ENCODE measurements at regions of chr3 and their contacts with region 1.

Region 1: GRCh38 chr3:184362668-184363540 is 1.4 kb downstream of the POLR2H start:
- DNase-seq: peak; percentile 93
- ATAC-seq: peak; percentile 86
- H3K4me3 Mint-ChIP-seq: peak overlapping the region; percentile 96
- H3K27ac Mint-ChIP-seq: peak overlapping the region; percentile 95
- H3K4me1 Mint-ChIP-seq: peaks cover 25% of the 10 kb centered on the region
- H3K27me3 Mint-ChIP-seq: no peaks in the 10 kb centered on the region
- CTCF ChIP-seq: no peak

Region 2: GRCh38 chr3:183635431-183636220 is 727.3 kb before region 1 on chr3 and contains the start of gene KLHL24:
- CTCF ChIA-PET with region 1: no interaction called
- POLR2A ChIA-PET with region 1: no interaction called
- intact Hi-C with region 1: loop called (anchors 5 kb)
- DNase-seq: peak; percentile 83
- ATAC-seq: peak; percentile 73
- H3K4me3 Mint-ChIP-seq: peak within 1 kb of the TSS; percentile 92
- H3K27ac Mint-ChIP-seq: peak within 1 kb of the TSS; percentile 92
- H3K4me1 Mint-ChIP-seq: peaks cover 27% of the 10 kb centered on the region
- H3K27me3 Mint-ChIP-seq: no peaks in the 10 kb centered on the region
- CTCF ChIP-seq: no peak
- total RNA-seq, gene KLHL24: 31.6 and 33.9 TPM in 2 replicates

Region 3: GRCh38 chr3:183895296-183895695 is 467.6 kb before region 1 on chr3:
- CTCF ChIA-PET with region 1: no interaction called
- POLR2A ChIA-PET with region 1: no interaction called
- intact Hi-C with region 1: loop called (anchors 5 kb)
- DNase-seq: no peak
- ATAC-seq: peak; percentile 97
- H3K4me3 Mint-ChIP-seq: no peak overlapping the region
- H3K27ac Mint-ChIP-seq: no peak overlapping the region
- H3K4me1 Mint-ChIP-seq: peaks cover 4% of the 10 kb centered on the region
- H3K27me3 Mint-ChIP-seq: peaks cover 22% of the 10 kb centered on the region
- CTCF ChIP-seq: no peak

Region 4: GRCh38 chr3:184185461-184186308 is 177.2 kb before region 1 on chr3 and contains the start of gene ABCF3:
- CTCF ChIA-PET with region 1: no interaction called
- POLR2A ChIA-PET with region 1: interaction called, 3 read pairs
- intact Hi-C with region 1: loop called (anchors 2 kb)
- DNase-seq: peak; percentile 99
- ATAC-seq: peak; percentile 95
- H3K4me3 Mint-ChIP-seq: peak within 1 kb of the TSS; percentile 99
- H3K27ac Mint-ChIP-seq: peak within 1 kb of the TSS; percentile 93
- H3K4me1 Mint-ChIP-seq: peaks cover 40% of the 10 kb centered on the region
- H3K27me3 Mint-ChIP-seq: no peaks in the 10 kb centered on the region
- CTCF ChIP-seq: no peak
- total RNA-seq, gene ABCF3: 78.0 and 86.7 TPM in 2 replicates

Region 5: DNA sequence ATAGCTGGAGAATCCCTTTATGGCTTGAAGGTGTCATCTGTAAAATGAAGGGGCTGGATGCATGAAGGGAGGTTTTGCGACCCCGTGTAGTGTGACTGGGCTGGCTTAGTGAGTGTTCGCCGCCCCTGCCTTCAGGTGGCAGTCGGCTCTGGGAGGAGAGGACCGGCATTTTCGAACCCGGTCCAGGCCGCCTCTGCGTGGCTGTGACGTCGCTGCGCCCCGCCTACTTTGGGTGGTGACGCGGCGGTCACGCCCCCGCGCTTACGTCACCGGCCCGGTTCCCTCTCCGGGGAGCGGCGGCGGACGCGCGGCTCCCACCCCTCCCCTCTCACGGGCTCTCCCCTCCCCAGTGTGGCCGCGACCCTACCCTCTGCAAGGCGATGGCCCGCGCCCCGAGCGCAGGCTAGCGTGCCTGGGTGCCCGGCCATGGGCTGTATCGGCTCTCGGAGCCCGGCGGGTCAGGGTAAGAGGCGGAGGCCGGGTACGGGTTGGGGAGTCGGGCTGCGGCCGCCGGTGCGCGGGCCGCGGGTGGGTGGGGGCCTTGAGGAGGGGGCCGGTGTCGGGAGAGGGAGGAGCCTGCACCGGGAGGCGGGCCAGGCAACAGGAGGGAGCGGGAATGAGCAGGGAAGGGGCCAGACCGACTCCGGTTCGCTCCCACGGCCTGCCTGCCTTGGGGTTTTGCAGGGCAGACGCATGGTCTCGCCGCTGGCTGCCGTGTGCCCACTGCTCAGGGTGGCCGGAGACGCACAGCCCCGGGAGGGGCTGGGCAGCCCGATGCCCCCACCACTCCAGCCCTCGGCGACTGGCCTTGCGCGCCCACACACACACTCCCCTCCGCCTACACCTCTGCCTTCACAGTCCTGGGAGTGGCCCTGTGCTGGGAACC is 27.0 kb before region 1 on chr3:
- CTCF ChIA-PET with region 1: no interaction called
- POLR2A ChIA-PET with region 1: interaction called, 3 read pairs
- intact Hi-C with region 1: loop called (anchors 1 kb)
- DNase-seq: peak; percentile 92
- ATAC-seq: peak; percentile 79
- H3K4me3 Mint-ChIP-seq: peak overlapping the region; percentile 84
- H3K27ac Mint-ChIP-seq: peak overlapping the region; percentile 85
- H3K4me1 Mint-ChIP-seq: peaks cover 33% of the 10 kb centered on the region
- H3K27me3 Mint-ChIP-seq: peaks cover 5% of the 10 kb centered on the region
- CTCF ChIP-seq: no peak

Region 6: GRCh38 chr3:184513276-184514170 is 150.6 kb after region 1 on chr3:
- CTCF ChIA-PET with region 1: interaction called, 8 read pairs
- POLR2A ChIA-PET with region 1: interaction called, 7 read pairs
- intact Hi-C with region 1: loop called (anchors 2 kb)
- DNase-seq: peak; percentile 75
- ATAC-seq: peak; percentile 100
- H3K4me3 Mint-ChIP-seq: peak overlapping the region; percentile 57
- H3K27ac Mint-ChIP-seq: no peak overlapping the region
- H3K4me1 Mint-ChIP-seq: peaks cover 11% of the 10 kb centered on the region
- H3K27me3 Mint-ChIP-seq: peaks cover 41% of the 10 kb centered on the region
- CTCF ChIP-seq: no peak

Region 7: GRCh38 chr3:184765730-184766074 is 402.8 kb after region 1 on chr3:
- CTCF ChIA-PET with region 1: no interaction called
- POLR2A ChIA-PET with region 1: no interaction called
- intact Hi-C with region 1: loop called (anchors 5 kb)
- DNase-seq: no peak
- ATAC-seq: peak; percentile 89
- H3K4me3 Mint-ChIP-seq: peak overlapping the region; percentile 8
- H3K27ac Mint-ChIP-seq: peak overlapping the region; percentile 35
- H3K4me1 Mint-ChIP-seq: peaks cover 26% of the 10 kb centered on the region
- H3K27me3 Mint-ChIP-seq: peaks cover 1% of the 10 kb centered on the region
- CTCF ChIP-seq: no peak

Measured in activated B cell treated with CpG ODN at 0.5 μM for 24 hours (primary cell).